ENCODE measurements at regions of chr11 and their contacts with region 1.

Region 1: GRCh38 chr11:66810576-66811185 is 32.6 kb upstream of the RCE1 start:
- DNase-seq: no peak
- ATAC-seq: no peak
- H3K4me3 Mint-ChIP-seq: no peak overlapping the region
- H3K27ac Mint-ChIP-seq: no peak overlapping the region
- H3K4me1 Mint-ChIP-seq: peaks cover 15% of the 10 kb centered on the region
- H3K27me3 Mint-ChIP-seq: no peaks in the 10 kb centered on the region
- CTCF ChIP-seq: no peak

Region 2: DNA sequence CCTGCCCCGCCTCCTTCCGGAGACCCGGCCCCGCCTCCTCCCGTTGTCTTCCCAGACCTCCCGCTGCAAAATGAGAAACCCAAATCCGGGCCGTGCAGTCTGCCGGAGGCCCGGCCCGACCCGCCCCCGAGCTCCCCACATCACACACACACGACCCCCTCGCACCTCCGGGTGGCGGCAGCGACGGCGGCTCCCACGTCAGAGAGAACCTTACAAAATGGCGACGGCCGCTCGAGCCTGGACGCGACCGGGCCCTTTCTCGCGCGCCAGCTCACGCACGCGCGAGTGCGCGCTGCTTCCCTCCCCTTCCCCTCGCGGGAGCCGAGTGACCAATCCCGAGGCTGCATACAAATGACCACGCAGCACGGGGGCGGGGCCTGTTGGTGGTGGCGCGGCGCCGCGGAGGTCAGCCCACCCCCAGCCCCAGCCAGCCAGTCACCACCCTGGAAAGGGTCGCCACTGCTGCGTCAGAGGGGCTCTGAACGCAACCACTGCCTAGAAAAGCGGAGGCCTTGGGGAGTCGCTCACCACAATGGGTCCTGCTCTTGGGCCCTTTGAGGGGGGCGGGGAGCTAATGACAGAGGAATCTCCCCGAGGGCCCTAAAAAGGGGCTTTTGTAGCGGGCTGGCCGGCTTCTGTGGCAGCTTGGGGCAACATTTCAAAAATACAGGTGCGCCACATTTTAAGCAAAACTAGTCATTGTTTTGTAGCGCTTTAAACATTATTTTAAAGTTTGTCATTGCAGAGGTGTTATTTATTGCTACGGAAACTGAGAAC is 132.9 kb before region 1 on chr11 and contains the start of gene RBM4B:
- CTCF ChIA-PET with region 1: no interaction called
- POLR2A ChIA-PET with region 1: no interaction called
- intact Hi-C with region 1: no loop called
- DNase-seq: peak; percentile 95
- ATAC-seq: peak; percentile 91
- H3K4me3 Mint-ChIP-seq: peak within 1 kb of the TSS; percentile 97
- H3K27ac Mint-ChIP-seq: peak within 1 kb of the TSS; percentile 98
- H3K4me1 Mint-ChIP-seq: peaks cover 38% of the 10 kb centered on the region
- H3K27me3 Mint-ChIP-seq: no peaks in the 10 kb centered on the region
- CTCF ChIP-seq: no peak
- total RNA-seq, gene RBM4B: 30.8 and 34.4 TPM in 2 replicates

Region 3: DNA sequence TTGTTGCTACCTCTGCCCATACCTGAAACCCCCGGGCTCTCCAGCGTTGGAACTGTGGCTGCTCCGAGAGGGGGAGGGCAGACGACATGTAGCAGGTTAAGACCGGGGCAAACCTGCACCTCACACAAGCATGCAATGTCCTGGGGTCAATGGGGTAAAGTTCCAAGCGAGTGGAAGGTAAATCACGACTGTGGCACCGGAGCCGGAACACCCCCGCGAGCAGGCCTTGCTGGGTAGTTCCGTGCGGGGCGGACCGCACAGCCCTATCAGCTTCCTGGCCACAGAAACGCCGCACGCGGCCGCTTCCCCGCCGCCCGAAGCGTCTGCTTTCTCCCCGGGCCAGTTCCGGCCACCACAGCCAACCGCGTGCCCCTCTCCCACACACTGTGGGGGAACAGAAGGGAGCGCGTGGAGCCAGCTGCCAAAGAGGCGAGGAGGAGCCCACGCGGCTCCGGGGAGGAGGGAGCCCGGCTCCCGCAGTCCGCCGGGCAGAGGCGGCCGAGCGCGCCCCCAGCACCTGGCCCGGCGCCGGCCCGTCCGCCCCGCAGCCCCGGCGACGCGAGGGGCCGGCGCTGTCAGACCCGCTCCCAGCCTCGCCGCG is 83.3 kb before region 1 on chr11:
- CTCF ChIA-PET with region 1: no interaction called
- POLR2A ChIA-PET with region 1: interaction called, 11 read pairs
- intact Hi-C with region 1: no loop called
- DNase-seq: peak; percentile 40
- ATAC-seq: peak; percentile 64
- H3K4me3 Mint-ChIP-seq: peak overlapping the region; percentile 78
- H3K27ac Mint-ChIP-seq: no peak overlapping the region
- H3K4me1 Mint-ChIP-seq: peaks cover 18% of the 10 kb centered on the region
- H3K27me3 Mint-ChIP-seq: peaks cover 35% of the 10 kb centered on the region
- CTCF ChIP-seq: no peak

Region 4: GRCh38 chr11:66768088-66768521 is 42.6 kb before region 1 on chr11:
- CTCF ChIA-PET with region 1: no interaction called
- POLR2A ChIA-PET with region 1: no interaction called
- intact Hi-C with region 1: loop called (anchors 5 kb)
- DNase-seq: no peak
- ATAC-seq: no peak
- H3K4me3 Mint-ChIP-seq: no peak overlapping the region
- H3K27ac Mint-ChIP-seq: no peak overlapping the region
- H3K4me1 Mint-ChIP-seq: peaks cover 9% of the 10 kb centered on the region
- H3K27me3 Mint-ChIP-seq: no peaks in the 10 kb centered on the region
- CTCF ChIP-seq: no peak

Measured in activated B cell treated with CpG ODN at 0.5 μM for 24 hours (primary cell).